Stomach (tissue), 19 donors: ENCODE measurements at regions of chr11 and their contacts with region 1.

Region 1: GRCh38 chr11:128630367-128631230 is 43.2 kb upstream of the ETS1 start:
- DNase-seq: peak; percentile 91 to 96
- H3K4me3 ChIP-seq: no peak overlapping the region
- H3K27ac ChIP-seq: peak overlapping the region in 2 of 5 donors; percentile 10 to 63
- H3K4me1 ChIP-seq: peaks cover 2 to 40% (median 17%) of the 10 kb centered on the region in 4 donors
- H3K27me3 ChIP-seq: no peaks in the 10 kb centered on the region
- CTCF ChIP-seq: peak in 6 of 7 experiments; percentile 65 to 91 (median 90)
- EP300 ChIP-seq: no peak
- POLR2A ChIP-seq: no peak

Region 2: DNA sequence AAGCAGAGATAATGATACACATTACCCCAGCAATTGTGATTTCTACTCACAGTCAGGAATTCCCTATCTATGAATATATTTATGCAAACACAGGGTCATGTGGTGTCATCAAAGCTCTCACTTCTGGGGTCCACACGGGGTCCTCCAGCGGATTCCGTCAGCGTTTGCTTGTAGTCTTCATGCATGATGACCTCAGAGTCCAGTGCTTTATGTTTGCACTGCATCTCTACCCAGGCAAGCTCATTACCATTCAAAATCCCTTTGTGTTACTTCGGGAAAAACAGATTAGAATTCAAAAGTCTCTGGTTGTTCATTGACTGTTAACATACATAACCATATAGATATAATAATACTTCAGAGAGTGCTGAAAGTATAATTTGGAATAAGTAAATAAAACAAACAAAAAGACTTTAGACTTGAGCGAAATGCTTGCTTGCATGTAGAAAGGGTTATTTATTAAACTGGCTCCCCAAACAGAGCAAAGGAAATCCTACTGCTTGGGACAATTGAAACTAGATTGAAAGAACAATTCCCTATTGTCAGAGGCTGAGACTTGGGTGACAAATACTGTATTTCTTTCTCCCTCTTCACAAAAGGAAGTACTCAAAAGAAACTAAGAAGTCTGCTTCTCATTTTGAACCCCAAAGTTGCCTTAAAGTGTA is 466.4 kb before region 1 on chr11:
- intact Hi-C with region 1: loop called (anchors 10 kb)
- DNase-seq: peak in 1 of 2 donors; percentile 53
- H3K4me3 ChIP-seq: no peak overlapping the region
- H3K27ac ChIP-seq: no peak overlapping the region
- H3K4me1 ChIP-seq: peaks cover 0 to 18% (median 2%) of the 10 kb centered on the region in 4 donors
- H3K27me3 ChIP-seq: no peaks in the 10 kb centered on the region
- CTCF ChIP-seq: no peak
- EP300 ChIP-seq: no peak
- POLR2A ChIP-seq: no peak

Region 3: DNA sequence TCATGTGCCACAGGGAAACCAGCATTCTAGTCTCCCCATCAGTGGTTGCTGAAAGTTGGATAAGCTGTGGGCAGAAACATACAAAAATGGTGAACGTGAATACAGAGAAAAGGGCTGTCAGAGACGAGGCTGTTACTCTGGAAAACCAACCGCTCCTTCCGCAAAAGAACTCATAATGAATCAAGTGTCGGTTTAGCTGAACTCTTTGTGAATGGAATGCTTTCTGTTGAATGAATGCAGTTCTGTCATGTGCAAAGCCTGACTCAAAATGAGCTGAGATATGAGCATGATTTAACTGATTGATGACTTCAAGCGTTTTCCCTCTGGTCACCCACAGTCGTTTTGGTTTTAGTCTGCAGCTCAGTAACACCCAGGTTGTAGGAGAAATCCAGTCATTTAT is 341.6 kb before region 1 on chr11:
- intact Hi-C with region 1: loop called (anchors 5 kb)
- DNase-seq: no peak
- H3K4me3 ChIP-seq: no peak overlapping the region
- H3K27ac ChIP-seq: no peak overlapping the region
- H3K4me1 ChIP-seq: peaks cover 23 to 39% (median 33%) of the 10 kb centered on the region in 4 donors
- H3K27me3 ChIP-seq: no peaks in the 10 kb centered on the region
- CTCF ChIP-seq: no peak
- EP300 ChIP-seq: no peak
- POLR2A ChIP-seq: no peak

Region 4: GRCh38 chr11:128365044-128365443 is 265.6 kb before region 1 on chr11:
- intact Hi-C with region 1: no loop called
- DNase-seq: peak in 1 of 2 donors; percentile 86
- H3K4me3 ChIP-seq: no peak overlapping the region
- H3K27ac ChIP-seq: no peak overlapping the region
- H3K4me1 ChIP-seq: peaks cover 0 to 16% (median 9%) of the 10 kb centered on the region in 4 donors
- H3K27me3 ChIP-seq: no peaks in the 10 kb centered on the region
- CTCF ChIP-seq: no peak
- EP300 ChIP-seq: no peak
- POLR2A ChIP-seq: no peak